PC-9 (cell line): ENCODE measurements at regions of chr3 and their contacts with region 1.

Region 1: DNA sequence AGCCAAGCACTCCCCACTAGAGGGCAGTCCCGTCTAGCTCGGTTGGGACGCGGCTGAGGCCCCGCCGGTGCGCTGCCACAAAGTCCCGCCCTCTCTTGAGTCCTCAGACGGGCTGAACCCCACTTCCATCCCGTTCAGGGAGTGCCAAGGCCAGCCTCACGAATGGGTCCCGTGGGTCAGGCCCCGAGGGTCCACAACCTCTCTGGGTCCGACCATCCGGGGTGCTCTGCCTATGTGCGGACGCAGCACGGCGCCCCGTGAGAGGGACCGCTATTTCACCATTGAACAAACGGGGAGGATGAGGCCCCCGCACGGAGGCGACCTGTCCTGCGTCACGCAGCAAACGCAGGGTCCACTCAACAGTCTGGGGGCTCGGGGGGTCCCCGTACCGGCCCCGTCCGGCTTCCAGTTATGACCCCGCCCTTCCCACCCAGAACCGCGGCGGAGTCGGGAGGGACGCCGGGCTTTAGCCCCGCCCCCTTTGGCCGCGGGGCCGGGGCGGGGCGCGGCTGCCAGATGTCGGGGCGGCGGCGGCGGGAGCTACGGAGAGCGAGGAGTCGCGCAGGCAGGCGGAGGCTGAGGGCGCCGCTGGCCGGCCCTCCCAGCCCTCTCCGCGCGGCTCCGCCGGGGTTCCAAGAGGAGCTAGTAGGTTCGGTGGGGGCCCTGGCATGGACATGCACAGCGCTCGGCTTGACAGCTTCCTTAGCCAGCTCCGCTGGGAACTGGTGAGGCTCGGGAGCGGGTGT is at the start of gene INKA1:
- DNase-seq: peak; percentile 65 to 85
- H3K4me3 ChIP-seq: peak within 1 kb of the TSS; percentile 84
- H3K27ac ChIP-seq: no peak within 1 kb of the TSS
- H3K4me1 ChIP-seq: peaks cover 11% of the 10 kb centered on the region; the same call in 1 of the 2 replicates
- H3K27me3 ChIP-seq: peaks cover 9% of the 10 kb centered on the region
- CTCF ChIP-seq: peak; percentile 81; the same call in 1 of the 2 replicates
- total RNA-seq, gene INKA1: 0.40 TPM in 1 of 2 replicates, not detected in the other

Region 2: DNA sequence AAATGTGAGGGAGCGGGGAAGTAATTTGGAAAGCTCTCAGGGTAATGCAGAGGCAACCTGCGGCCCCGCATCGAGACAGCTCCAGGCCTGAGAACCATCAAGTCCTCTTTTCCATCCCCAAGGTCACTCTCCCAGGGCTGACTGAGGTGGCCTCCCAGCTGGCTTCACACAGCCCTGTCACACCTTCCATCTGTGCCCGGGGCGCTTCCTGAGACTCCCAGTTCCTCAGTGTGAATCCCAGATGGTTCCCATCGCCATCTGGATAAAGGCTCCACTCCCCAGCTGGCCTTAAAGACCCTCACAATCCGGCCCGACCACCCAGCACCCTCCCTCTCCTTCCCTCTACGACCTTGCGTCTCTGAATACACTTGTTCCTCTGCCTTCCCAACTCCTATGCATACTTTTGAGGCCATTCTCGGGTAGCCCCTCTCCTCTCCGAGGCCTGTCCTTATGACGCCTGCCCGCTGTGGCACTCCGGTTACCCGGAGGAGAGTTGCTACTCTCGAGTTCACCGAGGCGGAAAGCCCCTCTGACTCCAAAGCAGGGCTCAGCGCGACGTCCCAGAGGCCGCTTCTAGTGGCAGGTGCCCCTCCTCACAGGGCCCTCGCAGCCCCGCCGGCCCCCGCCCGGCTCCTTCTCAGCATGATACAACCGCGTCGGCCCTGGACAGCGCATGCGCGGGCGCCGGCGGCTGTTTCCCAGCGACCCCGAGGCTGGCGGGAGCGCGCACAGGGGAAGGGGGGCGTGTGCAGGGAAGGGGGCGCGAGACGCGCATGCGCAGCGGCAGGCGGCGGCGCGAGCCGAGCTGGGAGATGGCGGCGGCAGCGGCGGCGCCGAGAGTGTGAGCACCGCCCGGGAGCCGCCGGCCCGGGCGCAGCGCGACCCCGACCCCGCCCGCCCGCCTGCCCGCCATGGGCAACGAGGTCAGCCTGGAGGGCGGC is 248.9 kb before region 1 on chr3 and contains the start of gene BSN:
- CTCF ChIA-PET with region 1: interaction called, 23 read pairs
- POLR2A ChIA-PET with region 1: interaction called, 4 read pairs
- intact Hi-C with region 1: no loop called
- DNase-seq: peak; percentile 56 to 91
- H3K4me3 ChIP-seq: peak within 1 kb of the TSS; percentile 97
- H3K27ac ChIP-seq: no peak within 1 kb of the TSS
- H3K4me1 ChIP-seq: peaks cover 3% of the 10 kb centered on the region; the same call in 1 of the 2 replicates
- H3K27me3 ChIP-seq: peaks cover 37% of the 10 kb centered on the region
- CTCF ChIP-seq: no peak
- total RNA-seq, gene BSN: 0.23 and 0.28 TPM in 2 replicates

Region 3: DNA sequence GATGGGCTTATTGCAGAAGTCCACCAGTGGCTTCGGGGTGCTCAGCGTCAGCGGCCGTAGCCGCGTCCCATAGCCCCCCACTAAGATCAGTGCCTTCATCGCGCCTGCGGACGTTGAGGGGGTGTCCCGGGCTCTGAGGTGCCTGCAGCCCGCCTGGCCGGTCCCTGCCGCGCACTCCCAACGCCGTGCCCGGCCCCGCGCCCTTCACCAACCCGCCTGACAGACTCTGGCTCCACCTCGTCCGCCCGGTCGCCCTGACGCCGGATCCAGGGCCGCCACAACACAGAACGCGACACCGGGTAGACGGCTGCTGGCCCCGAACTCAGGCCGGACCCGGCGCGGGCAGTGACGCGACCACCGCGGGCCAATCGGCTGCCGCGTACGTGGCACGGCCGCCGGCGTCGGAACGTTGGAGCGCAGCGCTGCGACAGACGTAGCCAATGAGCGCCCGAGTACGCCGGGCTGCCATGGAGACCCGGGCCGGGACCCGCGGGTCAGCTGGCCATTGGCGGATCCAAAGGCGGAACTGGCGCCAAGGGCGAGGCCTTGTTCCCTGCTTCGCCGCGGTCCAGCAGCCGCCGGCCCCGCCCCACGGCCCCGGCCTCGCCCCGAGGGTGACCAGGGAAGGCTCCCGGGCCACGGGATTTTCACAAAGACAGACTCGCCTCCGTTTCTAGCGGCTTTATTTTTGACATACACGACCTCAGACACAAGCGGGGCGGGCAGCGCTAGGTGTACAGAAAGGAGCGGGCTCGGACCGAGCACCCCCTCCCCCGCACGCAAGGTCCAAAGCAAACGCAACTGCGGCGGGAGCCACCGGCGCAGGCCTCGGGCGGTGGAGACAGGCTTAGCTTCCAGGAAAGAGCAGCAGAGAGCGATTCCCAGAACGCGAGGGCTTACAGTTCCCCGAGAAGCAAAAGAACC is 79.0 kb before region 1 on chr3 and contains the start of gene GMPPB:
- CTCF ChIA-PET with region 1: no interaction called
- POLR2A ChIA-PET with region 1: no interaction called
- intact Hi-C with region 1: loop called (anchors 5 kb)
- DNase-seq: peak; percentile 93 to 96
- H3K4me3 ChIP-seq: peak within 1 kb of the TSS; percentile 86
- H3K27ac ChIP-seq: peak within 1 kb of the TSS; percentile 78
- H3K4me1 ChIP-seq: peaks cover 13% of the 10 kb centered on the region; the same call in 1 of the 2 replicates
- H3K27me3 ChIP-seq: no peaks in the 10 kb centered on the region
- CTCF ChIP-seq: no peak
- total RNA-seq, gene GMPPB: 20.4 and 24.2 TPM in 2 replicates

Region 4: GRCh38 chr3:49759226-49759625 is 43.7 kb before region 1 on chr3:
- CTCF ChIA-PET with region 1: interaction called, 14 read pairs
- POLR2A ChIA-PET with region 1: no interaction called
- intact Hi-C with region 1: no loop called
- DNase-seq: no peak
- H3K4me3 ChIP-seq: no peak overlapping the region
- H3K27ac ChIP-seq: no peak overlapping the region
- H3K4me1 ChIP-seq: no peaks in the 10 kb centered on the region
- H3K27me3 ChIP-seq: no peaks in the 10 kb centered on the region
- CTCF ChIP-seq: no peak

Region 5: GRCh38 chr3:49839193-49839809 is 36.4 kb after region 1 on chr3:
- CTCF ChIA-PET with region 1: interaction called, 10 read pairs
- POLR2A ChIA-PET with region 1: no interaction called
- intact Hi-C with region 1: loop called (anchors 1 kb)
- DNase-seq: peak in 1 of 2 experiments; percentile 59
- H3K4me3 ChIP-seq: no peak overlapping the region
- H3K27ac ChIP-seq: no peak overlapping the region
- H3K4me1 ChIP-seq: no peaks in the 10 kb centered on the region
- H3K27me3 ChIP-seq: no peaks in the 10 kb centered on the region
- CTCF ChIP-seq: peak; percentile 80

Region 6: DNA sequence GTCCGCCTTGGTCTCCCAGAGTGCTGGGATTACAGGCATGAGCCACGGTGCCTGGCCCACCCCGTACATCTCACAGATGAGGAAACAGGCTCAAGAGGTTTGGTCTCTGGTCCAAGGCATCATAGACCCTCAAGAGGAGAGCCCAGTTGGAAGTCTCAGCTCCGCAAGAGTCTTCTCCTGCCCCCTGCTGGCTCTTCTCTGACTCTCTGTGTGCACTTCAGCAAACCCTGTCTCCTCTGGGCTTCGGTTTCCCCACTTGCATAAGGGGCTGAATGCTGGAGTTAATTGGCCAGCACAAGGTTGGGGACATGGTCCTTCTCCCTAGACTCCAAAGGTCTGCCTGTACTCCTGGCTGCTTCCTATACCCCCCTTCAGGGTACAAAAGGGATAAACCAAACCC is 96.9 kb after region 1 on chr3:
- CTCF ChIA-PET with region 1: interaction called, 4 read pairs
- POLR2A ChIA-PET with region 1: interaction called, 13 read pairs
- intact Hi-C with region 1: no loop called
- DNase-seq: no peak
- H3K4me3 ChIP-seq: peak overlapping the region; percentile 61
- H3K27ac ChIP-seq: peak overlapping the region; percentile 95
- H3K4me1 ChIP-seq: peaks cover 29% of the 10 kb centered on the region
- H3K27me3 ChIP-seq: no peaks in the 10 kb centered on the region
- CTCF ChIP-seq: no peak; the same call in 1 of the 2 replicates